Activated T-helper 1 cell treated with anti-CD3 and anti-CD28 coated beads, Interleukin-12 subunit alpha, Interleukin-12 subunit beta, Interleukin-2, Interleukin-4 antibody, amounts not matched to agents 30 ng/mL and 10 ng/mL and 1 ng/mL, durations not matched to agents 14 hours and 24 hours and 36 hours (primary cell): ENCODE measurements at regions of chr2 and their contacts with region 1.

Region 1: DNA sequence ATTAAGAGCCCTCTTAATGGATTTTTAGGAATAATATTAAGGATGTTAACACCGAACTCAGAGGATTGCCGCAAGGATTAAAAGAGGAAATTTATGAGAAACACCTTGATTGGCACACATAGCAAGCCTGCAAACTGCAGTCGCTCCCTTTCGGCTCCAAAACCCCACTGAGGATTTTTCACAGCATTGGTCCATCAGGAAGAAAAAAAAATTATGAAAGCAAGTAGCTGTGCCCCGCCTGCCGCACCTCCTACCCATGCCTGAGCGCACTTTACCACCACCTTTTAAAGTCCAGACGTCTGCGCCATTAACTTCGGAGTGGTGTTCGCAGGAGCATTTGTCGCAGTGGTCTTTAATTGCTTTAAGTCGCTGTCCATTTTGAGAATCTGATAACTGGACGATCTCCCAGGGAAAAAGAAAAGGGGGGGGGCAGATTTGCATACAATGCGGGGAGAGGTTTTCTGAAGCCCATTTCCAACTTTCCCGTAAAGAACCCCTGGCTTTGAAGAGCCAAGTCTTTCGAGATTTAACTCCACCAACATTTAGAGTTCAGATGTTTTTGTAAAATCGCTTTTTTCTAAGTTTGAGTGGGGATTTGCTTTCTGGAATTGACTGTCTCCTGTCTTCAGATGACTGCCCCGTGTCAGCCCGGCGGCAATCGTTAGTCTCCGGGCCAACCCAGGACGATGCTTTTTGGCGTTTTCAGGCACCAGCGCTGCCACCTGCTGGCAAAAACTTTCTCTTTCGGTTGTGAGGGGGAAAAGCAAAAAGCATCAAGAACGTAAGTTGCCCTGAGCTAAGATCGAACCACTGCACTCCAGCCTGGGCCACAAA is 914 bp upstream of the TRABD2A start:
- DNase-seq: peak; percentile 81
- H3K4me3 Mint-ChIP-seq: peak overlapping the region; percentile 97
- H3K27ac Mint-ChIP-seq: peak overlapping the region; percentile 99
- H3K4me1 Mint-ChIP-seq: peaks cover 71% of the 10 kb centered on the region
- H3K27me3 Mint-ChIP-seq: no peaks in the 10 kb centered on the region

Region 2: DNA sequence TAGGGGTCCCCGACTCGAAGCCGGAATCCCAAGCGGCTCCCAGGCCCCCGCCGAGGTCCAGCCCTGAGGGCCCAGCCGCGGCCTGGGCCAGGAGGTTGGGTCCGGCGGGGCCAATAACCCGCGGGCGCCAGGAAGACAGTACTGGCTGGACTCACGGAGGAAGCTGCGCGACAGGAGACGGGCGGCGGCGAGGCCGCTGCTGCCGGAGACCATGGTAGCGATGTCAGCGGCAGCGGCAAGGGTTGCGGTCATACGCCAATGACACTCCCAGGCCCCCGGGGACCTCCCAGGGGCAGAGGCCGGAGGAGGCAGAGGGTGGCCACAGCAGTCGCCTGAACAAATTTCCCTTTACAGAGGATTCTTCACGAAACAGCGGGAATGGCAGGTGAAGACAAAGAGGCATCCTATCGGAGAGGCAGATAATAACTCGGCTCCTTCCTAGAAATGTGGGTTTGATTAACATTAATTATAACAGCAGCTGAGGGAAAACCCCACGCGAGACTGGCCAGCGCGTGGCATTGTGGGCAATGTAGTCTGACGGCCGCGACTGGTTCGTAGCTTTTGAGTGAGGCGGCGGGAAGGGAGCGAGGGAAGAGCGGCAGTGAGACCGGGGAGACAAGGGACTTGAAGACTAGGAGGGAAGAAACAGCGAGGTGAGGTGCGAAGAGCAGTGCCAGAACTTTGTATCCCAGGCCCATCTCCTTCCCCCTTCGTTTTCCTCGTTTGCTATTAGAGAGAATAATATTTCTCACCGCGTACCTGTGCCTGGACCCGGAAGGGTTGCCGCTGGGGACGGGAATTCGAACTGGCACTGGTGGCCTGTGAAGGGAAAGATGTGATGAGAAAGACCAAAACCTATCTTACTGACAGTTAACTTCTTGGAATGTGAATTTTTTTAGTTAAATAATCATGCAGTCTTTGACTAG is 422.5 kb before region 1 on chr2 and contains the start of gene SUCLG1:
- intact Hi-C with region 1: loop called (anchors 1 kb)
- DNase-seq: peak; percentile 82
- H3K4me3 Mint-ChIP-seq: peak within 1 kb of the TSS; percentile 94
- H3K27ac Mint-ChIP-seq: peak within 1 kb of the TSS; percentile 97
- H3K4me1 Mint-ChIP-seq: peaks cover 52% of the 10 kb centered on the region
- H3K27me3 Mint-ChIP-seq: no peaks in the 10 kb centered on the region
- total RNA-seq, gene SUCLG1: 66.6 and 73.0 TPM in 2 replicates

Region 3: GRCh38 chr2:84516234-84516986 is 365.4 kb before region 1 on chr2 and contains the start of gene DNAH6:
- intact Hi-C with region 1: loop called (anchors 1 kb)
- DNase-seq: peak; percentile 84
- H3K4me3 Mint-ChIP-seq: peak within 1 kb of the TSS; percentile 82
- H3K27ac Mint-ChIP-seq: peak within 1 kb of the TSS; percentile 68
- H3K4me1 Mint-ChIP-seq: peaks cover 27% of the 10 kb centered on the region
- H3K27me3 Mint-ChIP-seq: peaks cover 26% of the 10 kb centered on the region
- total RNA-seq, gene DNAH6: 0.12 and 0.16 TPM in 2 replicates

Region 4: DNA sequence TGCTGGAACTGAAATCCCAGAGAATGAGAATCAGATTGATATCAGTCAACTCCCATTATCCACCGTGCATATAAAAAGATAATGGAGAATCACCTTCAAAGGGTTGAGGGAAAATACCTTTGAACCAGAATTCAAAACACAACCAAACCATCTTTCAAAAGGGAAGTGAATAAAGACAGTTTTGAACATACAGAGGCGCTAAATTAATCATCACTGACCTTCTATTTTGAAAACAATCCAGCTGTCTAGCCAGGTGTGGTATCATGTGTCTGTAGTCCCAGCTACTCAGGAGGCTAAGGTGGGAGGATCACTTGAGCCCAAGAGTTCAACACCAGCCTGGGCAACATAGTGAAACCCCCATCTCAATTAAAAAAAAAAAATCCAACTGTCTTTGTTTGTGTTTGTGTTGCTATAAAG is 64.6 kb before region 1 on chr2:
- intact Hi-C with region 1: loop called (anchors 1 kb)
- DNase-seq: no peak
- H3K4me3 Mint-ChIP-seq: no peak overlapping the region
- H3K27ac Mint-ChIP-seq: peak overlapping the region; percentile 45
- H3K4me1 Mint-ChIP-seq: peaks cover 29% of the 10 kb centered on the region
- H3K27me3 Mint-ChIP-seq: no peaks in the 10 kb centered on the region

Region 5: GRCh38 chr2:84865181-84865783 is 16.5 kb before region 1 on chr2:
- intact Hi-C with region 1: loop called (anchors 2 kb)
- DNase-seq: no peak
- H3K4me3 Mint-ChIP-seq: no peak overlapping the region
- H3K27ac Mint-ChIP-seq: peak overlapping the region; percentile 67
- H3K4me1 Mint-ChIP-seq: peaks cover 70% of the 10 kb centered on the region
- H3K27me3 Mint-ChIP-seq: no peaks in the 10 kb centered on the region

Region 6: DNA sequence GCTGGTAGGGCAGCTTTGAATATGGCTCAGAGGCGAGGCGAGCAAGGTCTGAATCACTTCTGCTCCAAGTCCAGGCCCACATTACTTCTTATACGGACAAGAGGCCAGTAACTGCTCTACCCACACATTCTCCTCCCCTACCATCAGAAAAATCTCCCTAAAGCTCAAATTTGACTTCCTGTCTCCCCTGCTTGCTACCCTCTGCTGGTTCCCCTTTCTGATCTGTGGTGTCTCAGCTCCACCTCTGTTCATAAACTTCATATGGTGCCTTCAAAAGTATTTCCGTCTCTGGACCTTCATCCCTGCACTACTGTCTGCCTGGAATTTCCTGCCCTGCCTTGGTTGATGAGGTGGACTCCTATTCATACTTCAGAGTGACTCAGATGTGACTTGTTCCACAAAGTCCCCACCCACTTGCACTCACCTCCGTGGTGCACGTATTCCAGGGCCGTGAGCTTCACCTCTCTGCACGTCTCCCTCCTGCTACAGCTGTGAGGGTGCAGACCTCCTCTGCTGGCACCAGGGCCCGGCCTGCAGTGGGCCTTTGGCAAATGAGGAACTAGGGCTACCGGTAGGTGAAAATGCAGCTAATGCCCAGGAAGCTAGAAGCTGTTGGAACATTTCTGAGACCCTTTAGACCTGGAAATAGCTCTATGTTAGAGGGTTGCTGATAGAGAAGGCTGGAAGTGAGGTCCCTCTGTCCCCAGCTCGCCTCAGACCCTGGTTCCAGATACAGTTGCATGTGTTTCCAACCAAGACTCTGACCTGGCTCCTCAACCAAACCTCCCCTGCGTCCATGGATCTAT is 64.6 kb after region 1 on chr2:
- intact Hi-C with region 1: no loop called
- DNase-seq: peak; percentile 63
- H3K4me3 Mint-ChIP-seq: peak overlapping the region; percentile 43
- H3K27ac Mint-ChIP-seq: peak overlapping the region; percentile 91
- H3K4me1 Mint-ChIP-seq: peaks cover 40% of the 10 kb centered on the region
- H3K27me3 Mint-ChIP-seq: no peaks in the 10 kb centered on the region